ENCODE measurements at regions of chr17 and their contacts with region 1.

Region 1: DNA sequence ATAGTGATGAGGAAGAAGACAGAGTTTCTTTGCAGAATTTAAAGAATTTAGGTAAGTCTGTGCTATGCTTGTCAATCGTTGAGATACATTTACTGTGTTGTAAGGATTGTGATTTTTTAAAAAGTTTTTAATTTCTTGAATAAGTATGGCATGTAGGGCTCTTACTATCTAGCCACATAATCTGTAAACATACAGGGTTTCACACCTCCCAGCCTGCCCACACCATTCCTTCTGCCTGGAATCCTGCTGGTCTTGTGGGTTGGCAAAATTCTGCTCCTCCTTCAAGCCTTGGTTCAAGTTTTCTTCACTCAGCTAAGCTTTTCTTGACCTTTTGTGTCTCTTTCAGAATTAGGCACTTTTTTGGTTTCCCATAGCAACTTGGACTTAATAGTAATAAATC is 7.5 kb downstream of the ZNHIT3 start:
- H3K4me3 Mint-ChIP-seq: no peak overlapping the region
- H3K27ac Mint-ChIP-seq: no peak overlapping the region
- H3K4me1 Mint-ChIP-seq: peaks cover 14% of the 10 kb centered on the region
- H3K27me3 Mint-ChIP-seq: no peaks in the 10 kb centered on the region

Region 2: GRCh38 chr17:36443777-36444176 is 50.2 kb before region 1 on chr17:
- intact Hi-C with region 1: no loop called
- H3K4me3 Mint-ChIP-seq: no peak overlapping the region
- H3K27ac Mint-ChIP-seq: no peak overlapping the region
- H3K4me1 Mint-ChIP-seq: no peaks in the 10 kb centered on the region
- H3K27me3 Mint-ChIP-seq: no peaks in the 10 kb centered on the region

Region 3: GRCh38 chr17:36529121-36529520 is 35.2 kb after region 1 on chr17:
- intact Hi-C with region 1: loop called (anchors 5 kb)
- H3K4me3 Mint-ChIP-seq: no peak overlapping the region
- H3K27ac Mint-ChIP-seq: peak overlapping the region; percentile 21
- H3K4me1 Mint-ChIP-seq: peaks cover 12% of the 10 kb centered on the region
- H3K27me3 Mint-ChIP-seq: no peaks in the 10 kb centered on the region

Measured in dendritic cell treated with granulocyte-macrophage colony-stimulating factor and Interleukin-4, amounts not matched to agents 40 ng/mL and 50 ng/mL, for 4 days (primary cell).